Activated naive CD4-positive, alpha-beta T cell treated with anti-CD3 and anti-CD28 coated beads for 36 hours (primary cell): ENCODE measurements at regions of chr2 and their contacts with region 1.

Region 1: GRCh38 chr2:218979846-218980734 is 4.9 kb downstream of the FEV start:
- DNase-seq: peak; percentile 90
- H3K4me3 Mint-ChIP-seq: peak overlapping the region; percentile 56
- H3K27ac Mint-ChIP-seq: no peak overlapping the region
- H3K4me1 Mint-ChIP-seq: peaks cover 27% of the 10 kb centered on the region
- H3K27me3 Mint-ChIP-seq: peaks cover 58% of the 10 kb centered on the region

Region 2: DNA sequence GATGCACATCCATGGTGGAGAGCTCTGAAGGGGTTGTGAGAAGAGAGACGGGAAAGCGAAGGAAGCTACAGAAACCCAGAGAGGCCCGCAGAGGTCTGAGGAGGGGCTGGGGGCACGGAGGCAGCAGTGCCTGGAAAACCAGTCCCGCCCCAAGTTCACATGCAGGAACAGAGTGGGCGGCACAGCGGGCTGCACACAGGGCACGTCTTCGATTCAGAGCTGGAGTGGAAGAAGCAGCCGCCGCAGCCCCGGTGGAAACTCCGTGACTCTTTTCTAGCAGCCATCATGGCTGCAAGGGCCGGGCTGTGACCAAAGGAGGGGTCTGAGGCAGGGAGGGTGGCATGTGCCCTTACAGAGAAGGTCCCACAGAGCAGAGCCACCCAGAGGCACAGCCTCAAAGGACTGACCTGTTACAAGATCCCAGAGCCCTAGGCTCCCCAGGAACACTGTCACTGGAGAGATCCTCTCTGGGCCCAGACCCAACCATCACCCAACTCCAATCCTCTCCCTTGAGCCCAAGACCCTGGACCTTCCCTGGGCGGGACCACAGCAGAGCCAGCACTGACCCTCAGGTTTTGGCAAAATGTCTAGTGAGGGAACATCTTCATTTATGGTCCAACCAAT is 159.2 kb before region 1 on chr2:
- CTCF ChIA-PET with region 1: no interaction called
- intact Hi-C with region 1: no loop called
- DNase-seq: no peak
- H3K4me3 Mint-ChIP-seq: no peak overlapping the region
- H3K27ac Mint-ChIP-seq: no peak overlapping the region
- H3K4me1 Mint-ChIP-seq: no peaks in the 10 kb centered on the region
- H3K27me3 Mint-ChIP-seq: peaks cover 6% of the 10 kb centered on the region

Region 3: DNA sequence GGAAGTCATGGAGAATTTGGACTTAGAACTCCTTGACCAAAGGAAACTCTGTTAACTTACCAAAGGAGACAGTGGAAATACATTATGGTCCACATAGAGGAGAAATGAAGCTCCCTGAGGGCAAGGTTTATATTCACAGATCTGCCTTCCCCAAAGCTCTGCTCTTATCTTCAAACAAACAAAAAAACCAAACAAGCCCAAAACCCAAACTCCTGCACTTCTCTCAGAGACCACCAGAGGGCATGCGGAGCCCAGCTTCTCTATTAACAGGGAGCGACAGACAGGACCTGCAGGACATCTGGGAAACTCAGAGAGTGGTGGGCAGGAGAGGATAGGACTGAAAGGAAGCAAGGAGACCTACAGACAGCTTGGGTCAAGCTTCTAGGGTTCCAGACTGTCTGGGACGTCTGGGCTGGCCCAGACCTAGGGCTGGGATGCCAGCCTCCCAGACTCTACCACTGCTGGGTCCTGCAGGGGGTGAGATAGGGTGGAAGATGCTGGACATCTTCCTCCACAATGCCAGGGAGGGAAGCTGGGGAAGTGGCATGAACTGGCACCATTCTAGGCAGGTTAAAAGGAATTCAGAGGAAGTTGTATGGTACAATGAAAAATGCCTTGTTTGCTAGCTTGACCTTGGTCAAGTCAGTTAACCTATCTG is 103.4 kb before region 1 on chr2:
- CTCF ChIA-PET with region 1: interaction called, 6 read pairs
- intact Hi-C with region 1: loop called (anchors 2 kb)
- DNase-seq: peak; percentile 86
- H3K4me3 Mint-ChIP-seq: no peak overlapping the region
- H3K27ac Mint-ChIP-seq: no peak overlapping the region
- H3K4me1 Mint-ChIP-seq: peaks cover 39% of the 10 kb centered on the region
- H3K27me3 Mint-ChIP-seq: peaks cover 41% of the 10 kb centered on the region

Region 4: GRCh38 chr2:218959141-218959731 is 20.9 kb before region 1 on chr2 and contains the start of gene CDK5R2:
- CTCF ChIA-PET with region 1: interaction called, 10 read pairs
- intact Hi-C with region 1: no loop called
- DNase-seq: peak; percentile 80
- H3K4me3 Mint-ChIP-seq: peak within 1 kb of the TSS; percentile 41
- H3K27ac Mint-ChIP-seq: no peak within 1 kb of the TSS
- H3K4me1 Mint-ChIP-seq: peaks cover 18% of the 10 kb centered on the region
- H3K27me3 Mint-ChIP-seq: peaks cover 69% of the 10 kb centered on the region
- total RNA-seq, gene CDK5R2: not detected

Region 5: GRCh38 chr2:218995972-218996711 is 16.1 kb after region 1 on chr2:
- CTCF ChIA-PET with region 1: interaction called, 63 read pairs
- intact Hi-C with region 1: loop called (anchors 1 kb)
- DNase-seq: peak; percentile 84
- H3K4me3 Mint-ChIP-seq: no peak overlapping the region
- H3K27ac Mint-ChIP-seq: no peak overlapping the region
- H3K4me1 Mint-ChIP-seq: peaks cover 14% of the 10 kb centered on the region
- H3K27me3 Mint-ChIP-seq: peaks cover 74% of the 10 kb centered on the region

Region 6: GRCh38 chr2:219002395-219003266 is 22.5 kb after region 1 on chr2:
- CTCF ChIA-PET with region 1: interaction called, 63 read pairs
- intact Hi-C with region 1: loop called (anchors 1 kb)
- DNase-seq: peak; percentile 76
- H3K4me3 Mint-ChIP-seq: peak overlapping the region; percentile 42
- H3K27ac Mint-ChIP-seq: no peak overlapping the region
- H3K4me1 Mint-ChIP-seq: peaks cover 9% of the 10 kb centered on the region
- H3K27me3 Mint-ChIP-seq: peaks cover 59% of the 10 kb centered on the region

Region 7: DNA sequence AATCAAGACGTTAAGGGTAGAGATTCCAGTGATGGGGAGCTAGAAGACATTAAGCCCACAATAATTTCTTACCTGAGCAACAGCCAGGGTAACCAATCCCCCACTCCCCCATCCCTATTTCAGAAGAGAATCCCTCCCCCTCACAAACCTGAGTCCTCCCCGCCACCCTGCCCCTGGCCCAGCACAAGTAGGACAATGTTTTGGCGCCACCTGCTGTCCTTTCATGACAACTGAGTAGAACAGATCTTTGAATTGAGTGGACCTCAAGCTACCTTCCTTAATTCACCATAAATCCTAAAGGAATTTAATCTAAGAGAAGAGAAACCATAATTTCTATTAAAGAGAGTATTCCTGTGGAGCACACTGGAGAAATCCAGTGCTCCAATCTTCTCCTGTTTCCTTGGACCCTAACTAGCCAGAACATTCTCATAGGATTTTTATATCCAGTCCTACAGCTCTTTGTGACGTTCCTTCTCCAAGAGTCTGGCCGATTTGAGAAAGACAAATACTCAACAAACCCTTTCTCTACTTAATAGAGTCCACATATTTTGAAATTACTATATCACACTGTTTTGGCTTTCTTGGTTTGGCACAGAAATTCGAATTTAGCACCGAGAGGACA is 139.4 kb after region 1 on chr2:
- CTCF ChIA-PET with region 1: interaction called, 3 read pairs
- intact Hi-C with region 1: loop called (anchors 2 kb)
- DNase-seq: peak; percentile 78
- H3K4me3 Mint-ChIP-seq: no peak overlapping the region
- H3K27ac Mint-ChIP-seq: no peak overlapping the region
- H3K4me1 Mint-ChIP-seq: peaks cover 4% of the 10 kb centered on the region
- H3K27me3 Mint-ChIP-seq: no peaks in the 10 kb centered on the region